ENCODE measurements at regions of chr16 and their contacts with region 1.

Region 1: DNA sequence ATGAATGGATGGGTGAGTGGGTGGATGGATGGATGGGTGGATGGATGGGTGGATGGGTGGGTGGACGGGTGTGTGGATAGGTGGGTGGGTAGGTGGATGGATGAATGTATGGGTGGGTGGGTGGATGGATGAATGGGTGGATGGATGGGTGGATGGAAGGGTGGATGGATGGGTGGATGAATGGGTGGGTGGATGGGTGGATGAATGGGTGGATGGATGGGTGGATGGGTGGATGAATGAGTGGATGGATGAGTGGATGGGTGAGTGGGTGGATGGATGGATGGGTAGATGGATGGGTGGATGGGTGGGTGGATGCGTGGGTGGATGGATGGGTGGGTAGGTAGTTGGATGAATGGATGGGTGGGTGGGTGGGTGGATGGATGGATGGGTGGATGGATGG is 13.2 kb upstream of the ATP2C2 start:
- DNase-seq: no peak
- ATAC-seq: no peak
- H3K4me3 ChIP-seq: no peak overlapping the region
- H3K27ac ChIP-seq: no peak overlapping the region
- H3K4me1 ChIP-seq: peaks cover 3% of the 10 kb centered on the region; the same call in 1 of the 2 replicates
- H3K27me3 ChIP-seq: peaks cover 55% of the 10 kb centered on the region
- CTCF ChIP-seq: no peak
- POLR2A ChIP-seq: no peak
- RAD21 ChIP-seq: no peak

Region 2: GRCh38 chr16:84116720-84117493 is 238.2 kb before region 1 on chr16 and contains the start of gene MBTPS1:
- CTCF ChIA-PET with region 1: no interaction called
- POLR2A ChIA-PET with region 1: no interaction called
- dilution Hi-C with region 1: no loop called
- in situ Hi-C with region 1: no loop called
- intact Hi-C with region 1: no loop called
- DNase-seq: peak; percentile 97
- ATAC-seq: peak; percentile 96
- H3K4me3 ChIP-seq: peak within 1 kb of the TSS; percentile 85
- H3K27ac ChIP-seq: peak within 1 kb of the TSS; percentile 95
- H3K4me1 ChIP-seq: no peaks in the 10 kb centered on the region
- H3K27me3 ChIP-seq: no peaks in the 10 kb centered on the region
- CTCF ChIP-seq: no peak
- POLR2A ChIP-seq: peak; percentile 83
- RAD21 ChIP-seq: no peak
- total RNA-seq, gene MBTPS1: 70.3 and 70.4 TPM in 2 replicates

Region 3: DNA sequence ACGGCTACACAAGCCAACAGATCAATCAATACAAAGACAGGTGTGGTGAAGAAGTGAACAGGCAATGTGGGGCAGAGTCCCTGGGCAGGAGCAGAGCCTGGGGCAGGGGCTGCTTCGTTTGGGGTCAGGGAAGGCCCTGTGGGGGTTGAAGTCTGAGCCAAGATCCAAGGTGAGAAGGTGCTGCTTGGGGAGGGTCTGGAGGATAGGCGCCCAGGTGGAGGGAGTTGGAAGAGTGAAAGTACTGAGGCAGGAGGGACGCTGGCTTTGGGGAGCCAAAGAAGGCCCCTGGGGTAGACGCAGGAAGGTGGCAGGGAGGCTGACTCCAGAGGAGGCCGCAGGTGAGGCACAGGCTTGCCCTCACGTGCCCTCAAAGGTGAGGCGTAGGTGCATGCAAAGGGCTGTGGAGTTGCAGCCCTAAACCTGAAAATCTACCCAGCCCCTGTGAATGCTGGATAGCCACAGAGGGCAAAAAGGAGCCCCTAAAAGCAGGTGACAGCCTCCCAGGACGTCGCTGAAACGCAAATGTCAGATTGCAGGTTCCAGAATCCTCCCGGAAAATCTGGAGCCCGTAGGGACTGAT is 27.1 kb before region 1 on chr16:
- CTCF ChIA-PET with region 1: no interaction called
- POLR2A ChIA-PET with region 1: no interaction called
- dilution Hi-C with region 1: no loop called
- in situ Hi-C with region 1: no loop called
- intact Hi-C with region 1: loop called (anchors 1 kb)
- DNase-seq: no peak
- ATAC-seq: no peak
- H3K4me3 ChIP-seq: no peak overlapping the region
- H3K27ac ChIP-seq: no peak overlapping the region
- H3K4me1 ChIP-seq: no peaks in the 10 kb centered on the region
- H3K27me3 ChIP-seq: no peaks in the 10 kb centered on the region
- CTCF ChIP-seq: no peak
- POLR2A ChIP-seq: no peak
- RAD21 ChIP-seq: no peak